IMR-90 (cell line): ENCODE measurements at regions of chr1 and their contacts with region 1.

Region 1: DNA sequence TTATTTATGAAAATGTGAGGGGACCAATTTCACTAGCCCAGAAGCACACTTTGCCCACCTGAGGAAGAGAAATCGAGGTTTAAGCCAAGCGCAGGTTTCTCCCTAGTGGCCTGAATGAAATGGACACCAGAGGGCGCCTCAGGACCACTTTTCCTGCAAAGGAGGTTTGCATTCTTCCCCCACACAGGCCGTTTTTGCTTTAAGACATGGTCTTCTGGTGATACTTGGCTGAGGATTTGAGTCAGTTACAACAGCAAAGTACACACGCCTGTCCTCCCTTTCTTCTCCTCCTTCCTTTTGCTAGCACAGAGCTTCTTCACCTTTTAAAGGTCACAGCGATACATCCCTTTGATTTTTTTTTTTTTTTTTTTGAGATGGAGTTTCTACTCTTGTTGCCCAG is 5.4 kb downstream of the PLA2G2E start:
- DNase-seq: peak; percentile 79
- ATAC-seq: peak; percentile 89
- H3K4me3 ChIP-seq: no peak overlapping the region
- H3K27ac ChIP-seq: no peak overlapping the region
- H3K4me1 ChIP-seq: no peaks in the 10 kb centered on the region
- H3K27me3 ChIP-seq: no peaks in the 10 kb centered on the region; the same call in 1 of the 2 replicates
- CTCF ChIP-seq: peak; percentile 94
- POLR2A ChIP-seq: no peak
- RAD21 ChIP-seq: peak; percentile 95

Region 2: DNA sequence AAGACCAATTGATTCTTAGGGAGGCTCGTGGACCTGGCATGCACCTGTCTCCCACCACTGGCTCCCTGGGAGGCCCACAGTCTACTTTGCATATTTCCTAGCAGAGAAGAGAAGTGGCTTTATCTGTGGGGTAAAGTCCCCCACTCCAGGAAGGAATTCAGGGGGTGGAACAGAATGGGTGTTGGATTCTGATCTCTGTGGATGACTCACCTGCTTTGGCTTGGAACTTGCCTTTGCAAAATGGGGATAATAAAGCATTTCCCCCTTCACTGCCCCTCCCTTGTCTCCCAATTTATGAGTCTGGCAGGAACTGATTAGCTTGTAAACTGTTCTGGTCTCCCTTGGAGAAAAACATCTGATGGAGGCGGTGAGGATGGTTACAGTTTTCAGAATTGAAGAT is 57.0 kb before region 1 on chr1:
- CTCF ChIA-PET with region 1: no interaction called
- POLR2A ChIA-PET with region 1: no interaction called
- dilution Hi-C with region 1: no loop called
- in situ Hi-C with region 1: no loop called
- intact Hi-C with region 1: no loop called
- DNase-seq: peak; percentile 19
- ATAC-seq: no peak
- H3K4me3 ChIP-seq: no peak overlapping the region
- H3K27ac ChIP-seq: no peak overlapping the region
- H3K4me1 ChIP-seq: peaks cover 6% of the 10 kb centered on the region; the same call in 1 of the 2 replicates
- H3K27me3 ChIP-seq: peaks cover 3% of the 10 kb centered on the region
- CTCF ChIP-seq: no peak
- POLR2A ChIP-seq: no peak
- RAD21 ChIP-seq: no peak

Region 3: GRCh38 chr1:19949016-19949415 is 31.0 kb after region 1 on chr1:
- CTCF ChIA-PET with region 1: no interaction called
- POLR2A ChIA-PET with region 1: no interaction called
- dilution Hi-C with region 1: no loop called
- in situ Hi-C with region 1: no loop called
- intact Hi-C with region 1: no loop called
- DNase-seq: peak; percentile 74
- ATAC-seq: peak; percentile 91
- H3K4me3 ChIP-seq: no peak overlapping the region
- H3K27ac ChIP-seq: no peak overlapping the region
- H3K4me1 ChIP-seq: no peaks in the 10 kb centered on the region
- H3K27me3 ChIP-seq: peaks cover 10% of the 10 kb centered on the region
- CTCF ChIP-seq: no peak
- POLR2A ChIP-seq: no peak
- RAD21 ChIP-seq: no peak

Region 4: GRCh38 chr1:20100632-20101355 is 182.7 kb after region 1 on chr1:
- CTCF ChIA-PET with region 1: no interaction called
- POLR2A ChIA-PET with region 1: no interaction called
- dilution Hi-C with region 1: no loop called
- in situ Hi-C with region 1: no loop called
- intact Hi-C with region 1: loop called (anchors 1 kb)
- DNase-seq: peak; percentile 48
- ATAC-seq: peak; percentile 95
- H3K4me3 ChIP-seq: no peak overlapping the region
- H3K27ac ChIP-seq: no peak overlapping the region
- H3K4me1 ChIP-seq: peaks cover 3% of the 10 kb centered on the region
- H3K27me3 ChIP-seq: peaks cover 22% of the 10 kb centered on the region
- CTCF ChIP-seq: peak; percentile 54
- POLR2A ChIP-seq: no peak
- RAD21 ChIP-seq: peak; percentile 59

Region 5: GRCh38 chr1:20151906-20152598 is 234.0 kb after region 1 on chr1:
- CTCF ChIA-PET with region 1: interaction called, 4 read pairs
- POLR2A ChIA-PET with region 1: no interaction called
- dilution Hi-C with region 1: no loop called
- in situ Hi-C with region 1: loop called (anchors 5 kb)
- intact Hi-C with region 1: loop called (anchors 1 kb)
- DNase-seq: peak; percentile 41
- ATAC-seq: peak; percentile 99
- H3K4me3 ChIP-seq: 0 out of 2 replicates have a peak overlapping the region, but pooled peaks have one; percentile 8
- H3K27ac ChIP-seq: no peak overlapping the region
- H3K4me1 ChIP-seq: peaks cover 3% of the 10 kb centered on the region; the same call in 1 of the 2 replicates
- H3K27me3 ChIP-seq: peaks cover 5% of the 10 kb centered on the region
- CTCF ChIP-seq: peak; percentile 90
- POLR2A ChIP-seq: no peak; the same call in 1 of the 2 replicates
- RAD21 ChIP-seq: peak; percentile 92

Region 6: GRCh38 chr1:20194757-20195461 is 276.9 kb after region 1 on chr1:
- CTCF ChIA-PET with region 1: interaction called, 3 read pairs
- POLR2A ChIA-PET with region 1: no interaction called
- dilution Hi-C with region 1: no loop called
- in situ Hi-C with region 1: no loop called
- intact Hi-C with region 1: loop called (anchors 1 kb)
- DNase-seq: peak; percentile 36
- ATAC-seq: peak; percentile 75
- H3K4me3 ChIP-seq: no peak overlapping the region
- H3K27ac ChIP-seq: no peak overlapping the region
- H3K4me1 ChIP-seq: no peaks in the 10 kb centered on the region
- H3K27me3 ChIP-seq: peaks cover 35% of the 10 kb centered on the region
- CTCF ChIP-seq: peak; percentile 59
- POLR2A ChIP-seq: no peak
- RAD21 ChIP-seq: peak; percentile 48

Region 7: DNA sequence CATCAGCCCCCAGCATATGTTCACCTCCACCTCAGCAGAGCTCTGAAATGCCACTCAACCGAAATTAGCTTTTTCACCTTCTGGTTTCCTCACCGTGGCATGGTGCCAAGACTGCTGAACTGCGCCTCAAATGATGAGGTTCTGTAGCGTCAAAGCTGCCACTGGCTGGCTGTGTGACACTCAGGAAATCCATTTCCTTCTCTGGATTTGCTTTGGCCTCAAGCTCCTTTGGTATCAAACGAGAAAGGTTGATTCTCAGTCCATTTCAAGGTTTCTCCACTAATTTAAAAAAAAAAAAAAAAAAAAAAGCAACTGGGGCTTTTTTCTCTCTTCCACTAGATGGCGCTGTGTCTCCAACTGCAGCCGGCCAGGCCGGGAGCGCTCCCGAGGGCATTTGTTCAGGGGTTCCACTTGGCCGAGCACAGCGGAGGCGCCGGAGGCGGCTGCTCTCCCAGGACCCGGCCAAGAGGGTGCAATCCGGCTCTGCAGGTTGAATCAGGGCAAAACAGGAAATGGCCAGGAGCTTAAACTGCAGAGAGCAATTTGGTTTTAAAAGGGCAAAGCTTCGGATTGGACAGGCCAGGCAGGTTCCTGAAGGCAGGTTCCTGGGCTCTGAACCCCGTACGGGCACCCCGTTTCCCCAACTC is 294.8 kb after region 1 on chr1:
- CTCF ChIA-PET with region 1: no interaction called
- POLR2A ChIA-PET with region 1: no interaction called
- dilution Hi-C with region 1: no loop called
- in situ Hi-C with region 1: no loop called
- intact Hi-C with region 1: loop called (anchors 1 kb)
- DNase-seq: peak; percentile 38
- ATAC-seq: peak; percentile 94
- H3K4me3 ChIP-seq: no peak overlapping the region
- H3K27ac ChIP-seq: no peak overlapping the region
- H3K4me1 ChIP-seq: no peaks in the 10 kb centered on the region
- H3K27me3 ChIP-seq: peaks cover 24% of the 10 kb centered on the region
- CTCF ChIP-seq: peak; percentile 78
- POLR2A ChIP-seq: no peak
- RAD21 ChIP-seq: peak; percentile 77

Region 8: DNA sequence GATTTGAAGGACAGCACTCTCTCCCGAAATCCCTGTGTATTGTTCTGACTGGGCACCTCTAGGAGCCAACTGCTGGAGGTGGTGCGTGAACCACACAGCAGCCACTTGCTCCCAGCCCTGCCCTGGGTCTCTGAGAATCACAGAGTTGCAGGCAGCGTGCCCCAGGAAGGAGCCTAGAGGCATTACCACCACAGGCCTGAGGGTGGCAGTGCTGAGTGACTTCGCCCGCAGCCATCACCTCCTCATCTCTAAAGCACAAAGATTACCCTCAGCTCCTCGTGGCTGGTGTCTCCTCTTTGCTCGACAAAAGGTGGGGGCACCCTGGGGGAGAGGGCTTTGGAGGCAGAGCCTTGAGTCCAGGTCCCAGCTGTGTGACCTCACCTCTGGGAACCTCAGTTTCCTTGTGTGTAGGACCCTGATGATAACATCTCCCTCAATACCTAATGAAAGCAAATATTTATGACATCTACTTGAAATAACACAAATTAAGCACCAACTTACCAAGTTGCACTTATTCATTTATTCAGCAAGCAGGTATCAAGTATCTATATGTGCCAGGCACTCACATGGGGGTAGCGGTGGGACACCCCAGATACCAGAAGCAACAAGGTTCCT is 458.9 kb after region 1 on chr1:
- CTCF ChIA-PET with region 1: no interaction called
- POLR2A ChIA-PET with region 1: no interaction called
- dilution Hi-C with region 1: no loop called
- in situ Hi-C with region 1: no loop called
- intact Hi-C with region 1: loop called (anchors 10 kb)
- DNase-seq: peak; percentile 35
- ATAC-seq: peak; percentile 92
- H3K4me3 ChIP-seq: no peak overlapping the region
- H3K27ac ChIP-seq: no peak overlapping the region
- H3K4me1 ChIP-seq: peaks cover 10% of the 10 kb centered on the region; the same call in 1 of the 2 replicates
- H3K27me3 ChIP-seq: peaks cover 14% of the 10 kb centered on the region; the same call in 1 of the 2 replicates
- CTCF ChIP-seq: peak; percentile 81
- POLR2A ChIP-seq: no peak
- RAD21 ChIP-seq: peak; percentile 75

Region 9: GRCh38 chr1:20633190-20634064 is 715.4 kb after region 1 on chr1 and contains the start of gene PINK1:
- CTCF ChIA-PET with region 1: no interaction called
- POLR2A ChIA-PET with region 1: no interaction called
- dilution Hi-C with region 1: no loop called
- in situ Hi-C with region 1: no loop called
- intact Hi-C with region 1: loop called (anchors 5 kb)
- DNase-seq: peak; percentile 53
- ATAC-seq: peak; percentile 88
- H3K4me3 ChIP-seq: peak within 1 kb of the TSS; percentile 84
- H3K27ac ChIP-seq: peak within 1 kb of the TSS; percentile 66
- H3K4me1 ChIP-seq: no peaks in the 10 kb centered on the region
- H3K27me3 ChIP-seq: 0 out of 2 replicates have a peak, but pooled peaks cover 4% of the 10 kb centered on the region
- CTCF ChIP-seq: peak; percentile 98
- POLR2A ChIP-seq: 0 out of 2 replicates have a peak, but pooled peaks have one; percentile 36
- RAD21 ChIP-seq: peak; percentile 84
- total RNA-seq, gene PINK1: 52.9 and 55.3 TPM in 2 replicates